Caki2 (cell line): ENCODE measurements at regions of chr5 and their contacts with region 1.

Region 1: GRCh38 chr5:180209137-180209581 is at the start of gene RASGEF1C:
- DNase-seq: peak; percentile 46
- total RNA-seq, gene RASGEF1C: 0.64 TPM in 1 of 2 replicates, not detected in the other

Region 2: GRCh38 chr5:180090098-180090768 is 118.9 kb before region 1 on chr5:
- in situ Hi-C with region 1: loop called (anchors 25 kb)
- DNase-seq: peak; percentile 75